Sigmoid colon (tissue), 7 donors: ENCODE measurements at regions of chr19 and their contacts with region 1.

Region 1: GRCh38 chr19:38831142-38831605 is 420 bp downstream of the ECH1 start:
- DNase-seq: peak; percentile 87
- H3K4me3 ChIP-seq: peak overlapping the region; percentile 65 to 91 (median 76)
- H3K27ac ChIP-seq: peak overlapping the region; percentile 88 to 98 (median 94)
- H3K4me1 ChIP-seq: peaks cover 0 to 53% (median 44%) of the 10 kb centered on the region in 4 donors
- H3K27me3 ChIP-seq: no peaks in the 10 kb centered on the region
- CTCF ChIP-seq: no peak
- EP300 ChIP-seq: no peak
- POLR2A ChIP-seq: no peak

Region 2: GRCh38 chr19:38647368-38647965 is 183.7 kb before region 1 on chr19 and contains the start of gene ACTN4:
- intact Hi-C with region 1: loop called (anchors 10 kb)
- DNase-seq: peak; percentile 99
- H3K4me3 ChIP-seq: peak within 1 kb of the TSS; percentile 95 to 100 (median 98)
- H3K27ac ChIP-seq: peak within 1 kb of the TSS; percentile 96 to 100 (median 98)
- H3K4me1 ChIP-seq: peaks cover 0 to 40% (median 33%) of the 10 kb centered on the region in 4 donors
- H3K27me3 ChIP-seq: no peaks in the 10 kb centered on the region
- CTCF ChIP-seq: no peak
- EP300 ChIP-seq: no peak
- POLR2A ChIP-seq: peak; percentile 96 to 97
- total RNA-seq, gene ACTN4: 131 to 328 (median 197) TPM

Region 3: GRCh38 chr19:38721979-38722773 is 109.0 kb before region 1 on chr19:
- intact Hi-C with region 1: loop called (anchors 5 kb)
- DNase-seq: no peak
- H3K4me3 ChIP-seq: no peak overlapping the region
- H3K27ac ChIP-seq: peak overlapping the region; percentile 67 to 97 (median 76)
- H3K4me1 ChIP-seq: peaks cover 0 to 53% (median 35%) of the 10 kb centered on the region in 4 donors
- H3K27me3 ChIP-seq: no peaks in the 10 kb centered on the region
- CTCF ChIP-seq: no peak
- EP300 ChIP-seq: no peak
- POLR2A ChIP-seq: no peak

Region 4: DNA sequence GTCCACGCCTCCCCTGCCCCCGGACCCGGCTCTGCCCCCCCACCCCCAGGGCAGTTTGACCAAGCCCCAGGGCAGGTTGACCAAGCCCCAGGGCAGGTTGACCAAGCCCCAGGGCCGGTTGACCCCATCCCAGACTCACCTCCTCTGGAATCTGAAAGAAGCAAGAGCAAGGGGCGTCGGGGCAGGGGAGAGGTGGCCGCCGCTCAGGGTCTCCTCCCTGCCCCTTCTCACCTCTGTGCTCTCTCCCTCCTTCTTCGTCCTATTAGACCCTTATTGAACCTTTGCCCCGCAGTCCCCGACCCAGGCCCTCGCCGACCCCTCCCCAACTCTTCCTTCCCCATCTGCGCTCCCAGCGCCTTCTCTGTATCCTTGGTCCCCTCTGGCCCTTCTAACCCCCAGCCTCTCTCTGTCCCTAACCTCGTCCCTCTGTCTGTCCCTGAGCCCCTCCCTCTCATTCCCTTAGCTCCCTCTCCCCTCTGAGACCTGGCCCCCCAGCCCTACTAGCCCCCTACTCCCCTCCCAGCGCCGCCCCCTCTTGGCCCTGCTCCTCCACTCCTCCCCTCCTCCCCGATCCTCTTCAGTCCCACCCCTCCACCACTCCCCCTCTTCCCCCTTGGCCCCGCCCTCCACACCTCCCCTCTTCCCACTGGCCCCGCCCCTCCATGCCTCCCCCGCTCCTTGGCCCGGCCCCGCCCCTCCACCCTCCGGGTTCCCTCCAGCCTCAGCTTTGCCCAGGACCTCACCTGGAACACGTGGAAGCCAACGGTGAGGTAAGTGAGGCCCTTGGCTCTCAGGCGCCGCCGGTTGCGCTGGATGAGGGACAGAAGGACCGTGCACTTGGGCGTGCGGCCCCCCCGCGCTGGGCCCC is 94.5 kb before region 1 on chr19:
- intact Hi-C with region 1: loop called (anchors 5 kb)
- DNase-seq: peak; percentile 71
- H3K4me3 ChIP-seq: peak overlapping the region; percentile 22 to 51 (median 40)
- H3K27ac ChIP-seq: peak overlapping the region in 3 of 4 donors; percentile 43 to 60 (median 47)
- H3K4me1 ChIP-seq: peaks cover 0 to 15% (median 12%) of the 10 kb centered on the region in 4 donors
- H3K27me3 ChIP-seq: no peaks in the 10 kb centered on the region
- CTCF ChIP-seq: no peak
- EP300 ChIP-seq: no peak
- POLR2A ChIP-seq: no peak

Region 5: DNA sequence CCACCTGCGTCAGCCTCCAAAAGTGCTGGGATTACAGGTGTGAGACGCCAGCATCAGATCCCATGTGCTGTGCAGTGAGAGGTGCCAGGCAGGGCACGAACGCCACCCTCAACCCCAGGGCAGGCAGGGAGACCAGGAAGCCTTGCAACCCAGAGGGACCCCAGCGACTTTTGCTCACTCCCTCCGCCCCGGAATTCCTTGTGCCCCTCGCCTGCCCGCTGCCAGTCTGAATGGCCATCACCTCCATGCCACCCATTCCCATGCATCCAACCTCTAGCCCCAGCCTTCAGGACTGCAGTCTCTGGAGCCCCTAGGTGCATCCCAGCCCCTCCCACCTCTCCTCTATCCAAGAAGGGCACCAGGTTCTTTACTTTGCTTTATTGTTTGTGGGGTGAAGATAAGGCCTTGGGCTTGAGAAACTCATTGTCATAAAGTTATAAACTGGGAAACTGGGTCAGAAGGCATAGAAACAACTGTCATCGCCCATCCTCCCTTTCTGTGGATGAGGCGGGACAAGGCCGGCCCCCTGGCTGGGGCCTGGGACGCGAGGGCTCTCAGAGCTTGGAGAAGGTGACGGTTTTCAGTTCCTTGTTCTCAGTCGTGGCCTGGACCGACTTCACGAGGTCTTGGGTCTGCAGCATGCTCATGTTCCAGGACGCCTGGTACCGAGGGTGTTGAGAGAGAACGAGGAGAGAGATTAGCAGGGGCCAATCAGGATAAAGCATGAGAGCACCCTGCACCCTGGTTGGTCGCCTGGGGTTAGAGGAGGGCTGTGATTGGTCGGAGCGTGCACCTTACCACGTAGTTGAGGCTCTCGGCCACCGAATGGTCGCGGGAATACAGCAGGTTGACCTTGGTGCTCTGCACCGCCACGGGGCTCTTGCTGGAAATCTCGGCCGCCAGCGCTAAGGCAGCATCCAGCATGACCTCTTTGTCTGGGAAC is 15.8 kb before region 1 on chr19:
- intact Hi-C with region 1: no loop called
- DNase-seq: no peak
- H3K4me3 ChIP-seq: no peak overlapping the region
- H3K27ac ChIP-seq: no peak overlapping the region
- H3K4me1 ChIP-seq: no peaks in the 10 kb centered on the region
- H3K27me3 ChIP-seq: no peaks in the 10 kb centered on the region
- CTCF ChIP-seq: no peak
- EP300 ChIP-seq: no peak
- POLR2A ChIP-seq: no peak

Region 6: DNA sequence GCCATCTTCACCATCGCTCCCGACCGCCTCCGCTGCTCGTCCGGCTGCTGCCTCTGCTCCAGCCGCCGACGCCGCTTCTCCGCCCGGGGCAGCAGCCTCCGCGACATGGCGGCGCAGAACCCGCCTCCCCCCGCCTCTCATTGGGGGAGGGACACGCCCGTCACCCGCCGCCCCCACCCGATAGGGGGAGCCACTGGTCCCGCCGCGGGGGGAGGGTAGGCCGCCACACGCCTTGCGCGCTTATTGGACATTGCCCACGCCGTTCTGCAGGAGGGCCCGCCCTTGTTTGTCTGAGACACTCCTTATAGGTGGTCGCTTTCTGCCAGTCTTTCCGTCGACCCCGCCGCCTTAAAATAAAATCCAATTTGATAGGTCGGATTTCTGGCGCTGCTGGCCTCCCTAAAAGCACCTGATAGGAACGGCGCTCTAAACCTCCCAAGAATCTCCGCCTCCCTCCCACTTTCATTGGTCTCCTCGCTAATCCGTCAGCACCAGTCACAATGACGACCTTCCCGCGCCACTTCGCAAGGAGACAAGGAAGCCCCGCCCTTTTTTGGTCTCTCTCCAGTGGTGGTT is 18.8 kb after region 1 on chr19 and contains the start of gene HNRNPL:
- intact Hi-C with region 1: loop called (anchors 1 kb)
- DNase-seq: peak; percentile 100
- H3K4me3 ChIP-seq: peak within 1 kb of the TSS; percentile 73 to 100 (median 98)
- H3K27ac ChIP-seq: peak within 1 kb of the TSS; percentile 100
- H3K4me1 ChIP-seq: peaks cover 0 to 59% (median 49%) of the 10 kb centered on the region in 4 donors
- H3K27me3 ChIP-seq: no peaks in the 10 kb centered on the region
- CTCF ChIP-seq: no peak
- EP300 ChIP-seq: peak in 1 of 4 donors; percentile 10
- POLR2A ChIP-seq: peak; percentile 88 to 89
- total RNA-seq, gene HNRNPL: 140 to 201 (median 171) TPM

Region 7: DNA sequence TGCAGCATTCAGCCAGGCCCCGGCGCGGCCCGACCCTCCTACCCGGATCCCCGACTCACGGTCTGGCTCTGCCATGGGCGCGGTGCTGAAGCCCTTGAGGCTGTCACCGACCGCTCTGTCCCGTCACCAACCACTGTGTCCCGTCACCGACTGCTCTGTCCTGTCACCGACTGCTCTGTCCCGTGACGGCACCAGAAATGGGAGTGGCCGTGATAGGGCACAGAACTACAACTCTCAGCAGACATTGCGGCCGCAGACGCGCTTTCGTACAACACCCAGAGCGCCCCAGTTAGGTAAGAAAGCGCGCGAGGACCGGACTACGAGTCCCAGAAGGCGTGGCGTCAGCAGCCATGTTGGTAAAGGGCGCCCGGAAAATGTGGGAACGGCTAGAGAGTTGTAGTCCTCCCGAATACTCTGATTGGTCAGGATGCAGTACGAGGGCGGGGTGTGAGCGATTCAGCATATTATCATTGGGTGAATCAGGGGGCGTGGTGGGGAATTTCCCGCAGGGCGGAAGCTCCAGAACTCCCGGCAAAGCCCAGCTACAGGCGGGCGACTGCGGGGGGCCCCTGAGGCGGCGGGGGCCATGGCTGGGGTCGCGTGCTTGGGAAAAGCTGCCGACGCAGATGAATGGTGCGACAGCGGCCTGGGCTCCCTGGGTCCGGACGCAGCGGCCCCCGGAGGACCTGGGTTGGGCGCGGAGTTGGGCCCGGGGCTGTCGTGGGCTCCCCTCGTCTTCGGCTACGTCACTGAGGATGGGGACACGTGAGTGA is 68.5 kb after region 1 on chr19 and contains the starts of genes NFKBIB and SIRT2:
- intact Hi-C with region 1: loop called (anchors 1 kb)
- DNase-seq: peak; percentile 100
- H3K4me3 ChIP-seq: peak within 1 kb of the TSS; percentile 58 to 90 (median 66)
- H3K27ac ChIP-seq: peak within 1 kb of the TSS; percentile 90 to 95 (median 92)
- H3K4me1 ChIP-seq: peaks cover 0 to 51% (median 37%) of the 10 kb centered on the region in 4 donors
- H3K27me3 ChIP-seq: no peaks in the 10 kb centered on the region
- CTCF ChIP-seq: no peak
- EP300 ChIP-seq: peak in 1 of 4 donors; percentile 63
- POLR2A ChIP-seq: peak; percentile 44 to 69
- total RNA-seq, gene NFKBIB: 13.8 to 20.2 (median 16.9) TPM
- total RNA-seq, gene SIRT2: 65.5 to 92.7 (median 85.2) TPM

Region 8: DNA sequence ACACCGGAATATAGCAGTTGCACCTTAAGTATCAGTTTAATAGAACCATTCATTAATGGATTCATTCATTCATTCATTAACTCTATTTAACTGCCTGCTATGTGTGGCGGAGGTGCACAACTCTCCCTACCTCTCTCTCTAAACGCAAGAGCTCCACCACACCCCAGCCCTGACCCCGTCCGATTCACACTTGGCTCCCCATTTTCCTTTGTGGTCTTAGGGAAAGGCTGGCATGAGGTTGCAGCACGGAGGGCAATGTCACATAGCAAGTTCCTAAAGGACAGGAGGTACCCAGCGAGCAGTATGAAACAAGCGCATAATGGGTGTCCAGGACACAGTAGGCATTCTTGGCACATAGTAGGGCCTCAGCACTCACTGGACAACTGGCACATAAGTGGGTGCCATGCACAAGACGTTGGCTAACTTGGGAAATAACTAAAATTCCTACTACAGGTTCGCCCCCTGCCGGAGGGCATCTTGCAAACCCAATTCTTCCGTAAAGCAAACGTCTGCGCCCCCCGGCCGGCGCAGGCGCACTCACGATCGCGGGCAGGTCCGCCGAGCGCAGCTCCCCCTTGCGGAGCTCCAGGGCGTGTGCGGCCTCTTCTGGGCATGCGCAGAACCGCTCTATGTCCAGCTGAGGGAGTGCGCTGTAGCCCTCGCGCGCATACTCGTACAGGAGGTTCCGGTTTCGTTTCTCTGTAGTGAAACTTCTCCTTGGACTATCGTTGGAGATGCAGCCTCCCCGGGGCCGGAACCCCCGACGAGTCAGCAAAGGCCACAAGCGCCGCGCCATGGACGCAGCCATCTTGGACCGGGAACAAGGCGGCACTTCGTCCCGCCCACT is 99.0 kb after region 1 on chr19 and contains the start of gene SARS2:
- intact Hi-C with region 1: loop called (anchors 2 kb)
- DNase-seq: peak; percentile 96
- H3K4me3 ChIP-seq: peak within 1 kb of the TSS; percentile 59 to 73 (median 64)
- H3K27ac ChIP-seq: peak within 1 kb of the TSS; percentile 84 to 91 (median 89)
- H3K4me1 ChIP-seq: peaks cover 0 to 27% (median 21%) of the 10 kb centered on the region in 4 donors
- H3K27me3 ChIP-seq: no peaks in the 10 kb centered on the region
- CTCF ChIP-seq: peak; percentile 95 to 98 (median 98)
- EP300 ChIP-seq: no peak
- POLR2A ChIP-seq: no peak
- total RNA-seq, gene SARS2: 7.4 to 32.7 (median 12.2) TPM